ENCODE measurements at regions of chr4 and their contacts with region 1.

Region 1: DNA sequence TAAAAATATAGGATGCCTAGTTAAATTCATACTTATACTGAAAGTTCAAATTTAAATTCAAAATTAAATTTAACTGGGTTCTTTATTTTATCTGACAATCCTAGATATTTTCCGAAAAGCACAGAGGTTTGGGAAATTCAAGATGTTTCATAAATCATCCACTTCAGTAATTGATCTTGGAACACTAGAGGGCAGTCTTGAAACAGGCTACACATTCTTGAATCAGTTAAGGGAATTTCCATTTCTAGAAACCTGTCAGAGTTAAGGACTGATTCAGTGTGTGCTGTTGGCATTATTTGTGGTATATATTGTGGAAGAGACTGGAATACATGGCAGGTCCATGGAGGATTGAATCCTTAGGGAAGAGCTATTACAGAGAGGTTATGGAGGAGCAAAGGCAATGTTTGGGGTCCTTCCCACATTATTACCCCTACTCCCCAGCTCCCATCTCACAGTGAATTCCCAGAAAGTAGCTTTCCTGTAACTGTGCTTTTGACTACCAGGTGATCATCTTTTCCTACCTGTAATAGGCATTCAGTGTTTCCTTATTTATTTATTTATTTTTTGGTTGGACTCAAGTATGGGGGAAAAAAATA is 92.9 kb downstream of the EGF start:
- DNase-seq: peak; percentile 57
- ATAC-seq: peak; percentile 74
- H3K4me3 ChIP-seq: no peak overlapping the region
- H3K27ac ChIP-seq: no peak overlapping the region
- H3K4me1 ChIP-seq: no peaks in the 10 kb centered on the region
- H3K27me3 ChIP-seq: no peaks in the 10 kb centered on the region
- CTCF ChIP-seq: peak; percentile 62 to 89 (median 83)
- POLR2A ChIP-seq: no peak
- RAD21 ChIP-seq: peak; percentile 93

Region 2: GRCh38 chr4:109890076-109890475 is 115.5 kb before region 1 on chr4:
- CTCF ChIA-PET with region 1: no interaction called
- POLR2A ChIA-PET with region 1: no interaction called
- RAD21 ChIA-PET with region 1: no interaction called
- intact Hi-C with region 1: no loop called
- DNase-seq: no peak
- ATAC-seq: no peak
- H3K4me3 ChIP-seq: no peak overlapping the region
- H3K27ac ChIP-seq: no peak overlapping the region
- H3K4me1 ChIP-seq: no peaks in the 10 kb centered on the region
- H3K27me3 ChIP-seq: no peaks in the 10 kb centered on the region
- CTCF ChIP-seq: no peak
- POLR2A ChIP-seq: no peak
- RAD21 ChIP-seq: no peak

Region 3: DNA sequence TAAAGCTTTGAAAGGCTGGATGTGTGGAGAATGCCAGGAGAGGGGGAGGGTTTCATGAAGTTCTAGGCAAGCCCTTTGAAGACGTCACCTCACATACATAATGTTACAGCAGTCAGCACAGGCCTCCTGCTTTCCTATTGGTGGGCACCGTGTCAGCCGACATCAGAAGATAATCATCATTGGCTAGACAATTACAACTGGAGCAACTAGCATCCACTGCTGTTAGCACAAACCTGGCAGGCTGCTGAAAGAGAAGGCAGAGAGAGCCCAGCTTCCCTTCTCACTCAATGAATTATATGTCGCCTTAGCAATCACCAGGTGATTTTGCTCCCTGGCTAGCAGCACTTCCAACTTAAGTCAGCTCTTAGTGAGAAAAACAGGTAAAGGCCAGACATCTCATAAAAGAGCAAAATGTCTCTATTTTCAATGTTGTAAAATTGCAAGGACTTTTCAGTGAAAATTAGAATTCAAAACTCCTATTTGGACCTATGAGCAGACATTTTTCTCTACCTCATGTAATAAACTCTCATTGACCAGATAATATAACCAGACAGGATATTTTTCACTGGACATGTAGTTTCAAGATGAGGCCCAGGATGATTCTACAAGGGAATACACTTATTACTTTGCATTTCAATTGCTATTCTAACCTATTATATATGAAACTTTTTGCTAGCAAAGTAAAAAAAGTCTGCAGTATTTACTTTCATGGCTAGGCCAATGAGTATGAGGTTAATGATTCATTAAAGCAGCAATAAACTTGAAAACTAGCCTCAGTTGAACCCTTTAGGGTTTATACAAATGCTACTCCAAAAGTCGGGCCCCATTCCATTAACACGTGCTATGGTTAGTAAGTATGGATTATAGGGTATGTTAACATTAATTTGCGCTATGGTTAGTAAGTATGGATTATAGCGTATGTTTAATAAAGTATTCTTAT is 188.5 kb after region 1 on chr4:
- CTCF ChIA-PET with region 1: no interaction called
- POLR2A ChIA-PET with region 1: no interaction called
- RAD21 ChIA-PET with region 1: no interaction called
- intact Hi-C with region 1: loop called (anchors 5 kb)
- DNase-seq: peak; percentile 88
- ATAC-seq: peak; percentile 66
- H3K4me3 ChIP-seq: peak overlapping the region in 1 of 2 experiments; percentile 2; a peak in 1 of 4 replicates
- H3K27ac ChIP-seq: peak overlapping the region; percentile 42; the same call in 1 of the 2 replicates
- H3K4me1 ChIP-seq: peaks cover 22 to 29% of the 10 kb centered on the region in 2 experiments
- H3K27me3 ChIP-seq: no peaks in the 10 kb centered on the region
- CTCF ChIP-seq: no peak
- POLR2A ChIP-seq: peak; percentile 90
- RAD21 ChIP-seq: no peak

Region 4: DNA sequence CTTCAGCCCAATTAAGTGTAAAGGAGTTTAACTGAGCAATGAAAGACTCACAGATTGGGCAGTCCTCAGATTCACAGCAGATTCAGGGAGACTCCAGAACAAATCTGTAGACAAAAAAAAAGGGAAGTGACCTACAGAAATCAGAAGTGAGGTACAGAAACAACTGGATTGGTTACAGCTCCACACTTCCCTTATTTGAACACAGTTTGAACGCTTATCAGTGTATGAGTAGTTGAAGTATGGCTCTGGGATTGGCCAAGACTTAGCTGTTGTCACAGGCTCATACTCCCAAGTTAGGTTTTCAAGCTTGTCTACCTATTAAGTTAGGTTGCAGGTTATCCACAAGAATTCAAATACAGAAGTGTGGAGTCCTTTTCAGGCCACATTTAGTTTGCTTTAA is 305.2 kb after region 1 on chr4:
- CTCF ChIA-PET with region 1: no interaction called
- POLR2A ChIA-PET with region 1: no interaction called
- RAD21 ChIA-PET with region 1: no interaction called
- intact Hi-C with region 1: loop called (anchors 5 kb)
- DNase-seq: no peak
- ATAC-seq: peak; percentile 53; the same call in 1 of the 2 replicates
- H3K4me3 ChIP-seq: no peak overlapping the region
- H3K27ac ChIP-seq: no peak overlapping the region
- H3K4me1 ChIP-seq: no peaks in the 10 kb centered on the region
- H3K27me3 ChIP-seq: no peaks in the 10 kb centered on the region
- CTCF ChIP-seq: no peak
- POLR2A ChIP-seq: no peak
- RAD21 ChIP-seq: no peak

Region 5: GRCh38 chr4:110371016-110371770 is 365.6 kb after region 1 on chr4:
- CTCF ChIA-PET with region 1: no interaction called
- POLR2A ChIA-PET with region 1: no interaction called
- RAD21 ChIA-PET with region 1: no interaction called
- intact Hi-C with region 1: no loop called
- DNase-seq: no peak
- ATAC-seq: no peak
- H3K4me3 ChIP-seq: no peak overlapping the region
- H3K27ac ChIP-seq: no peak overlapping the region
- H3K4me1 ChIP-seq: no peaks in the 10 kb centered on the region
- H3K27me3 ChIP-seq: no peaks in the 10 kb centered on the region
- CTCF ChIP-seq: no peak
- POLR2A ChIP-seq: no peak
- RAD21 ChIP-seq: no peak

Region 6: DNA sequence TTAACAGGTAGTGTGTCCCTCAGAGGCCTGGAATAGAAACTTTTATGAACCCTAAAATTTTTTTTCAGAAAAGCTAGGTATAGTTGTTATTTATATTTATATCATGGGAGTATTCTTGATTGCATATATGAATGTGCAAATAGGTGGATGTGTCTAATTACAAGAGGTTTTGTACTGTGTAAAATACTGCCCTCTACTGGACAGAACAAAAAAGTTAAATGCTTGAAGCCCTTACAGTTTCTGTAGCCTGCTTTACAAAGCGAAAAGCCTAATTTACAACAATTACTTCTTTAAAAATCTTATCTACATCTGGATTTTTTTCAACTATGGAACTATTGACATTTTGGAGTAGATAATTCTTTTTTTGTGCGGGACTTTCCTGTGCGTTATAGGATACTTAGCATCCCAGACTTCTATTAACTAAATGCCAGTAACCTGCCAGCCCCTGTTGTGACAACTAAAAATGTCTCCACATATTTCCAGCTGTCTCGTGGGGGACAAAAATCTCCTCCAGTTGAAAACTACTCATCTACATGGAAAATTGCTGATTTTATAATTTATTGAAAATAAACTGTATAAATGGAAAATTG is 505.5 kb after region 1 on chr4:
- CTCF ChIA-PET with region 1: interaction called, 13 read pairs
- POLR2A ChIA-PET with region 1: interaction called, 4 read pairs
- RAD21 ChIA-PET with region 1: interaction called in 1 of 2 experiments, 8 read pairs
- intact Hi-C with region 1: loop called (anchors 1 kb)
- DNase-seq: peak; percentile 56
- ATAC-seq: peak; percentile 69
- H3K4me3 ChIP-seq: no peak overlapping the region
- H3K27ac ChIP-seq: no peak overlapping the region
- H3K4me1 ChIP-seq: peaks cover 0 to 9% of the 10 kb centered on the region in 2 experiments; a peak in 1 of 4 replicates
- H3K27me3 ChIP-seq: no peaks in the 10 kb centered on the region
- CTCF ChIP-seq: peak; percentile 52 to 73 (median 62); a peak in 4 of 6 replicates
- POLR2A ChIP-seq: no peak
- RAD21 ChIP-seq: peak; percentile 74

Region 7: GRCh38 chr4:110622841-110623717 is 617.5 kb after region 1 on chr4 and contains the start of gene PITX2:
- CTCF ChIA-PET with region 1: no interaction called
- POLR2A ChIA-PET with region 1: no interaction called
- RAD21 ChIA-PET with region 1: no interaction called
- intact Hi-C with region 1: loop called (anchors 5 kb)
- DNase-seq: peak; percentile 92
- ATAC-seq: peak; percentile 100
- H3K4me3 ChIP-seq: peak within 1 kb of the TSS; percentile 60 to 75
- H3K27ac ChIP-seq: no peak within 1 kb of the TSS; the same call in 1 of the 2 replicates
- H3K4me1 ChIP-seq: peaks cover 3 to 14% of the 10 kb centered on the region in 2 experiments; a peak in 3 of 4 replicates
- H3K27me3 ChIP-seq: no peaks in the 10 kb centered on the region
- CTCF ChIP-seq: no peak
- POLR2A ChIP-seq: peak; percentile 49
- RAD21 ChIP-seq: no peak
- total RNA-seq, gene PITX2: 8.3 TPM

Measured in HCT116 (cell line).